ENCODE measurements at regions of chr12 and their contacts with region 1.

Region 1: GRCh38 chr12:123365025-123365917 is 624 bp upstream of the SBNO1 start:
- DNase-seq: peak; percentile 98 to 99 (median 99)
- H3K4me3 ChIP-seq: peak overlapping the region; percentile 92 to 94
- H3K4me3 Mint-ChIP-seq: peak overlapping the region; percentile 85 to 96 (median 94)
- H3K27ac ChIP-seq: peak overlapping the region; percentile 85
- H3K27ac Mint-ChIP-seq: peak overlapping the region; percentile 89 to 99 (median 97)
- H3K4me1 ChIP-seq: peaks cover 32% of the 10 kb centered on the region
- H3K4me1 Mint-ChIP-seq: peaks cover 10 to 32% (median 18%) of the 10 kb centered on the region in 4 donors
- H3K27me3 ChIP-seq: no peaks in the 10 kb centered on the region
- H3K27me3 Mint-ChIP-seq: no peaks in the 10 kb centered on the region

Region 2: DNA sequence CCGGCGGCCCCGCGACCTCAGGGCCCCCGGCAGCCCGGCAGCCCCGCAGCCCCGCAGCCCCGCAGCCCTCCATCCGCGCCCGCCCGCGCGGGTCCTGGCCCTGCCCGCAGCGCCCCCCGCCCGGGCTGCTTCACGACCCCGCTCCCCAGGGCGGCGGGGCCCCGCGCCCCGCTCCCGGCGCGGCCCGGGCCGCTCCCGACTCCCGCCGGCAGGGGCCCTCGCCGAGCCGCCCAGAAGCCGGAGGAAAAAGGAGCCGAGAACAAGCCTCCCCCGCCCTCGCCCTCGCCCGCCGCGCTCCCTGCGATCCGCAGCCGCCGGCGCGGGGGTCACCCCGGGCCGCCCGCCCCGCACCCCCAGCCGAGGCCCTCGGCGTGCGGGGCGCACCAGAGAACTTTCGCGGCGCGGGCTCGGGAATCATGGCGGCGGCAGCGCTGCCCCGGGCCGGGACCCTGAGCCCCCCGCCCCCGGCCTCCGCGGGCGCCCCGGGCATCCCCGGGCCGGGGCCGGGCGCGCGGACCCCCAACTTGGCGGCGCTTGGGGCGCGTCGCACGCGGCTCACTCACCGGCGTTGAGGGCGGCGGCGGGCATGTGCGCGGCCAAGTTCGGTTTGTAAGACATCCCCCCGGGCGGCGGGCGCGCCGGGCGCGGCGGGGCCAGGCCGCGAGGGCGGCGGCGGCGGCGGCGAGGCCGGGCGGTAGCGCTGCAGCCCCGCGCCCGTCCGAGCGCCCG is 94.1 kb before region 1 on chr12:
- CTCF ChIA-PET with region 1: interaction called, 6 read pairs
- POLR2A ChIA-PET with region 1: interaction called, 3 read pairs
- intact Hi-C with region 1: loop called (anchors 1 kb)
- DNase-seq: peak; percentile 70 to 74 (median 71)
- H3K4me3 ChIP-seq: peak overlapping the region in 1 of 2 donors; percentile 27
- H3K4me3 Mint-ChIP-seq: no peak overlapping the region
- H3K27ac ChIP-seq: no peak overlapping the region
- H3K27ac Mint-ChIP-seq: no peak overlapping the region
- H3K4me1 ChIP-seq: peaks cover 15% of the 10 kb centered on the region
- H3K4me1 Mint-ChIP-seq: peaks cover 10 to 32% (median 15%) of the 10 kb centered on the region in 4 donors
- H3K27me3 ChIP-seq: no peaks in the 10 kb centered on the region
- H3K27me3 Mint-ChIP-seq: no peaks in the 10 kb centered on the region

Region 3: GRCh38 chr12:123354600-123354999 is 10.7 kb before region 1 on chr12:
- CTCF ChIA-PET with region 1: interaction called, 6 read pairs
- POLR2A ChIA-PET with region 1: interaction called, 15 read pairs
- intact Hi-C with region 1: no loop called
- DNase-seq: no peak
- H3K4me3 ChIP-seq: no peak overlapping the region
- H3K4me3 Mint-ChIP-seq: peak overlapping the region in 2 of 8 donors; percentile 20
- H3K27ac ChIP-seq: no peak overlapping the region
- H3K27ac Mint-ChIP-seq: peak overlapping the region in 1 of 7 donors; percentile 57
- H3K4me1 ChIP-seq: peaks cover 54% of the 10 kb centered on the region
- H3K4me1 Mint-ChIP-seq: peaks cover 32 to 69% (median 50%) of the 10 kb centered on the region in 4 donors
- H3K27me3 ChIP-seq: no peaks in the 10 kb centered on the region
- H3K27me3 Mint-ChIP-seq: no peaks in the 10 kb centered on the region

Region 4: DNA sequence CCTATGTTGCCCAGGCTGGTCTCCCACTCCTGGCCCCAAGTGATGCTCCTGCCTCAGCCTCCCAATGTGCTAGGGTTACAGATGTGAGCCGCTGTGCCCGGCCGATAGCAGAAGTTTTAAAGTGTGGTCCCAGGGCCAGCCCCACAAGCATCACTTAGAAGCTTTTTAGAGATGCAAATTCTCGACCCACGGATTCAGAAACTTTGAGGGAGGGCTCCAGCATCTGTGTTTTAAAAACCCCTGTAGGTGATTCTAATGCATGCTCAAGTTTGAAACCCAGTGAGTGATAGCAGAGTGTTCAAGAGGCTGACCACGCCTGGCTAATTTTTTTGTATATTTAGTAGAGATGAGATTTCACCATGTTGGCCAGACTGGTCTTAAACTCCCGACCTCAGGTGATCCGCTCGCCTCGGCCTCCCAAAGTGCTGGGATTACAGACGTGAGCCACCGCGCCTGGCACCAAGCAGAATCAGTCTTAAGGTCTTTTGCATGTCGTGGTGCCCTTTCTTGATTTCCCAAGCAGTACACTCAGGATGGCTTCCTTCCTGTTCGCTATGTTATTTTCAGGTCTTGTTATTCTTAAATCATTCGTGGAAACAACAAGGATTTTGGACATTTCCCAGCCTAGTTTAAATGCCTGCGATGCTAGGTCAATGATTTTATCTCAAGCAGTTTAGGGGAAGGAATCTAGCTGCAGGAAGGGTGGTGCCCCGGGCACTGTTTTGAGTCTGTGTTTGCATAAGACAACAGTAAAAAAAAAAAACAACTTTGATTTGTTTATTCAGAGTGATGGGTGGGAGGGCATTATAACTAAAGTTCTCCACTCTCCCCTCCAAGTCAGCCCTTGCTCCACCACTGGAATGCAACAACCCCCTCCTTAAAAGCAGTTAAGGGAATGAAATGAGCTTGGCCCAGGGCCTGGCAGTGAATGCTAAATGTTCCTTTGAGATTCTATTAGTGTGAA is 80.4 kb after region 1 on chr12:
- CTCF ChIA-PET with region 1: interaction called, 5 read pairs
- POLR2A ChIA-PET with region 1: interaction called, 14 read pairs
- intact Hi-C with region 1: no loop called
- DNase-seq: no peak
- H3K4me3 ChIP-seq: no peak overlapping the region
- H3K4me3 Mint-ChIP-seq: peak overlapping the region; percentile 63 to 75 (median 72)
- H3K27ac ChIP-seq: peak overlapping the region; percentile 18
- H3K27ac Mint-ChIP-seq: peak overlapping the region; percentile 77 to 95 (median 86)
- H3K4me1 ChIP-seq: peaks cover 38% of the 10 kb centered on the region
- H3K4me1 Mint-ChIP-seq: peaks cover 20 to 42% (median 34%) of the 10 kb centered on the region in 4 donors
- H3K27me3 ChIP-seq: no peaks in the 10 kb centered on the region
- H3K27me3 Mint-ChIP-seq: no peaks in the 10 kb centered on the region

Region 5: DNA sequence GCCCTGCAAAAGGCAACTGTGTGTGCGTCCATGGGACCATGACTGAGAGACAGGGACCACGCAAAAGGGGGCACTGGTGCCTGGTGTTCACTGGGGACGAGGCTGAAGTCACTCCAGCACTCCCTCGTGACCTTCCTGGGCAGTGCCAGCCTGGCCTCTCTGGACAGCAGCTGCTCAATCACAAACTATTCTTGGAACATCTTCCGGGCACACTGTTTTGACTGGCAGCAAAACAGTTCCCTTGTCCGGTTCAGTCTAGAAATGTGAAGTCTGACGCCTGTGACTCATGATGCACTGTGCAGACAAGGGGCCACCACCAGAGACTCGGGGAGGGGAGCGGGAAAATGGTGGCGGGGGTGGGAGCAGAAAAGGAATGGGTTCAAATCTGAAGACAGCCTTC is 113.5 kb after region 1 on chr12:
- CTCF ChIA-PET with region 1: interaction called, 5 read pairs
- POLR2A ChIA-PET with region 1: interaction called, 13 read pairs
- intact Hi-C with region 1: no loop called
- DNase-seq: no peak
- H3K4me3 ChIP-seq: no peak overlapping the region
- H3K4me3 Mint-ChIP-seq: no peak overlapping the region
- H3K27ac ChIP-seq: no peak overlapping the region
- H3K27ac Mint-ChIP-seq: peak overlapping the region in 2 of 7 donors; percentile 32 to 52
- H3K4me1 ChIP-seq: peaks cover 31% of the 10 kb centered on the region
- H3K4me1 Mint-ChIP-seq: peaks cover 22 to 49% (median 35%) of the 10 kb centered on the region in 4 donors
- H3K27me3 ChIP-seq: no peaks in the 10 kb centered on the region
- H3K27me3 Mint-ChIP-seq: no peaks in the 10 kb centered on the region

Region 6: DNA sequence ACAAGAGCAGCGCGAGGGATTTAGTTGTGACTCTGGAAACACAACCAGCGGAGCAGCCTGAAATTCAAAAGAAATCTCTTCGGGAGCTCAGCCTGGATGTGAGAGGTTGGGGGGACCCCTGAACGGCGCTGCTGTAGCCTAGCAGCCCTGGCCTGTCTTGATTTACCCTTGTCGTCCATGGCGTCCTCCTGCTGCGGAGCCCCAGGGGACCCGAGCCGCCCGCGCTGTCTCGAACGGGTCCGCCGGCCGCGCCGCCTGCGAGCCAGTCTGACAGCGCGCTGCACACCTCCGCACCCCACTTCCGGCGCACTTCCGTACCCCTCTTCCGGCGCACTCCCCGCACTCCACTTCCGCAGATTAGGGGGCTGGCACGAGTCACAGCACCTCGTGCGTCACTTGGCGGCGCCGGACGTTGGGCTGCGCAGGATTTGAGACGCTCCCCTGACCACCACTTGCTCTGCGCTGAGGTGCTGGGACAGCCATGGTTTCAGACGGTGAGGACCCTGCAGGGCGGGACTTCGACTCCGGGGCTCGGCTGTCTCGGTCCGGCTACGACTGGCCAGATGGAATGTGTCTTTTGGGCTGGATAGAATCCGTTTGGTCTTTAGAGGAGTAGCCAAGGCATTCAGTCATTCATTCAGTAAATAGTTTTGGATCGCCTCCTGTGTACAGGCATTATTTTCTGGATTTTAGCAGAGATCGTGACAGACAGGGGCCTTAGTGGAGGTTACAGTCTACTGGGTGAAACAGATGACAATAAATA is 268.3 kb after region 1 on chr12 and contains the starts of genes EIF2B1 and GTF2H3:
- CTCF ChIA-PET with region 1: interaction called, 3 read pairs
- POLR2A ChIA-PET with region 1: interaction called, 3 read pairs
- intact Hi-C with region 1: loop called (anchors 1 kb)
- DNase-seq: peak; percentile 94 to 97 (median 94)
- H3K4me3 ChIP-seq: peak within 1 kb of the TSS; percentile 83 to 92
- H3K4me3 Mint-ChIP-seq: peak within 1 kb of the TSS; percentile 92 to 98 (median 96)
- H3K27ac ChIP-seq: peak within 1 kb of the TSS; percentile 81
- H3K27ac Mint-ChIP-seq: peak within 1 kb of the TSS; percentile 92 to 99 (median 97)
- H3K4me1 ChIP-seq: peaks cover 23% of the 10 kb centered on the region
- H3K4me1 Mint-ChIP-seq: peaks cover 21 to 38% (median 31%) of the 10 kb centered on the region in 4 donors
- H3K27me3 ChIP-seq: no peaks in the 10 kb centered on the region
- H3K27me3 Mint-ChIP-seq: no peaks in the 10 kb centered on the region
- total RNA-seq, gene EIF2B1: 50.3 to 51.2 TPM
- total RNA-seq, gene GTF2H3: 18.9 to 24.6 TPM

Measured in CD4-positive, alpha-beta memory T cell (primary cell).